ENCODE measurements at regions of chr11 and their contacts with region 1.

Region 1: GRCh38 chr11:9070749-9071476 is 20.5 kb downstream of the SCUBE2 start:
- DNase-seq: peak; percentile 23

Region 2: DNA sequence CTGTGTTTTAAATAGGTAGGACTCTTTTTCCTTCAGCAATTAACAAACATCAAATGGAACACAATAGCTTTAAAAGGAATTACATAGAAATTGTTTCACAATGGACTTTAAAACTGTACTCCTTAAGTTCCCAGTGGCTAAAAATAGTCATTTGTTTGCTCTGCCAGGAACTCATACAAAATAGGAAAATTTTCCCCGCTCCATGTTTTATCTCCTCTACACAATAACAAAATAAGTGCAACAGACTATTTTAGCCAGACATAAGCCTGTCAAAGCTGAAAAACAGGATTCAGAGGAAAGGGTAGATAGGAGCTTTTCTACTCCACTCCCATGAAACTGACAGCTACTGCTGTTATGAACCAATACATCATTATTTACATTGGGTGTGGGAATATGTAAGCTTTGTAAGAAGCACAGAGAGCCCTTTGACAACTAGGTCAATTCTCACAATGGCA is 567.0 kb before region 1 on chr11:
- intact Hi-C with region 1: no loop called
- DNase-seq: no peak

Region 3: DNA sequence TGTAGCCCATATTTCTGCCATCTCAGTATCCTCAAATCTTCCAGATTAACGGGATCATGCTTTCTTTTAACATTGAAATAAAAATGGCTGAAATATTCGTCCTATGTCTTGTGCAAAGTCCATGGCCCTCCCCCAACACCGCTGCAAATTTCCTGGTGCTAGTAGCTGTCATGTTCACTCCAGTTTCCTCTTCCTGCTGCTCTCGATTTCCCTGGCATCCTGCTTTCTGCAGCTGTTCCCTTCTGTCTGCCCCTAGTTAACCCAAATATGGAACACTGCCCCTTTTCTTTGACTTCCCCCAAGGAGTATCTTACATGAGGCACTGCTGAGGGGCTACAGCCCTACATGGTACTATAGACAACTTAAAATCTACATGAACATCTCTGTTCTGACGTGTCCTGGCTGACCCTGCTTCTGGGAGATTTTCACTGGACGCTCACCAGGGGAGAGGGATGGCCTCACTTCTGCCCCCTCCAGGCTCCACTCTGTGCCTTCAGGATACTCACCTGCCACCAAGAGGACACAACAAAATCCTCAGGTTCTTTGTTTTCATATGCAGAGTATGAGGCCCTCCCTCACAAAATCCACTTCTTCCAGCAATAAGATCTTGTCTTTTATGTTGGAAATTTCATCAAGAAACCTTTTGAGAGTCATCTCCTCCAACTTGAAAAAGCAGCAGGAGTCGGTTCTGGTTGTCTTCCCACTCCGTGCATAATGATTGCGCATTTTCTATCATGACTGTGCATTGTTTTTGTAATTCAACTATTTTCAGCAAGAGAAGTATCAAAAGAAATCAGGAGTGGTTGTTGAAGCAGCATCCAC is 50.0 kb after region 1 on chr11:
- intact Hi-C with region 1: no loop called
- DNase-seq: no peak

Region 4: GRCh38 chr11:9347100-9347499 is 276.2 kb after region 1 on chr11:
- intact Hi-C with region 1: loop called in 1 of 2 experiments (anchors 5 kb)
- DNase-seq: no peak

Measured in posterior vena cava (tissue), 2 donors.